AG04450 (cell line): ENCODE measurements at regions of chr3 and their contacts with region 1.

Region 1: GRCh38 chr3:125280668-125281361 is 68.3 kb upstream of the SLC12A8 start:
- DNase-seq: no peak
- H3K4me3 ChIP-seq: no peak overlapping the region
- H3K27ac ChIP-seq: no peak overlapping the region
- H3K27me3 ChIP-seq: no peaks in the 10 kb centered on the region
- CTCF ChIP-seq: no peak

Region 2: DNA sequence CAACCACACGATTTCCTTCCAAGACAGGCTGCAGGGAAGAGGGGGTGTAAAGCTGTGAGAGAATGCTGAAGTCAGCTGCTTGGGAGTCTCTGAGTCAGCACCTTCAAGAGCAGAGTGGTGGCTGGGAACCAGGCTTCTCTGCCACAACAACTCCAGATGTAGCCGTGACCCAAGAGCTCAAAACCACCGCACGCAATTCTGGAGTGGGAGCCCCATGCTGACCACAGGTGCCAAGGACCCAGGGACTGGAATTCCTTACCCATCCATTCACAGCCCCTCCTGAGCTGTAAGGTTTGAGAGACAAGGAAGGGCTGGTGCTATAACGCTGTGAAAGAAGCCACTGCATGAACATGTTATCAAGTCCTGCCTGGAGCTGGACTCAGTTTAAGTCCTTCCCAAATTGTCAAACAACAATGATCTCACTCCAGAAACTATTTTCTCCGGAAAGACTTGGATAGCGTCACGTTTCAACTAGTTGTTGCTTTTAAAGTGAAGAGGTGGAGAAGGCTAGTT is 489.1 kb before region 1 on chr3:
- CTCF ChIA-PET with region 1: no interaction called
- POLR2A ChIA-PET with region 1: interaction called, 11 read pairs
- DNase-seq: peak; percentile 91
- H3K4me3 ChIP-seq: no peak overlapping the region
- H3K27ac ChIP-seq: peak overlapping the region; percentile 87
- H3K27me3 ChIP-seq: no peaks in the 10 kb centered on the region
- CTCF ChIP-seq: no peak

Region 3: GRCh38 chr3:124995460-124995994 is 285.3 kb before region 1 on chr3:
- CTCF ChIA-PET with region 1: no interaction called
- POLR2A ChIA-PET with region 1: no interaction called
- DNase-seq: no peak
- H3K4me3 ChIP-seq: no peak overlapping the region
- H3K27ac ChIP-seq: peak overlapping the region; percentile 21
- H3K27me3 ChIP-seq: no peaks in the 10 kb centered on the region
- CTCF ChIP-seq: peak; percentile 54

Region 4: DNA sequence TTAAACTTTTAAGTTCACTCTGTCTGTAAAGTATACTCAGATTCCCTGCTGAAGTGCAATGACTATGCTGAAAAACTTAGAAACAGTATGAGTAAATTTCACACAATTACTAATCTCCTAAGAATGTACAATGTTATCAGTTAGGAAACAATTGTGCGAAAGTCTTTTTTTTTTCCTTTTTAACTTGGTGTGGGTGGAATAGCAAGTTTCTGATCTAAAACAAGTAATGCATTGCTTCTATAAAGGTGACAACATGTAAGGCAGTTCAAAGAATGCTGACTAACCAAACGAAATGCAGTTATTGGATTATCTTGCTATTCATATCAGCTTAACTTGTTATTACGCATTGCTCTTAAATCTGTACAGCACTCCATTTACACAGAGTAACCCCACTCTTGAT is 48.9 kb before region 1 on chr3:
- CTCF ChIA-PET with region 1: no interaction called
- POLR2A ChIA-PET with region 1: no interaction called
- DNase-seq: peak; percentile 29
- H3K4me3 ChIP-seq: no peak overlapping the region
- H3K27ac ChIP-seq: no peak overlapping the region
- H3K27me3 ChIP-seq: no peaks in the 10 kb centered on the region
- CTCF ChIP-seq: no peak

Region 5: DNA sequence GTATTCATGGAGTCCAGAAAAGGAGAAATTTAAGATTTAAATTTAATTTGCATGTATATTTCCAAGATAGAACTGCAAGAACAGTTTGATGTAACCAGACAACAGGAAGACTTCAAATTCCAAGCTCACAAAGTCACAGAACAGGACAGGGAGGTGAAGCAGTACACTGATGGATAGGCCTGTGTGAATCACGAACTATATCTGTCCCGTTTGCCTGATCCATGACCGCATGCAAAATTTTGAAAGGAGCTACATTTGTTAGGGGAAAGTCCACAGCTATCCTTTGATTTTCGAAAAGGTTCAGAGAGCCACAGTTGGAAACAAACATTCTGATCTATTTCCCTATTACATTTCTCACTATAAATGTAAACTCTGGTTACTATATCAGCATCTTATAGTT is 11.2 kb after region 1 on chr3:
- CTCF ChIA-PET with region 1: no interaction called
- POLR2A ChIA-PET with region 1: no interaction called
- DNase-seq: no peak
- H3K4me3 ChIP-seq: no peak overlapping the region
- H3K27ac ChIP-seq: no peak overlapping the region
- H3K27me3 ChIP-seq: no peaks in the 10 kb centered on the region
- CTCF ChIP-seq: no peak

Region 6: GRCh38 chr3:125357032-125357658 is 76.3 kb after region 1 on chr3:
- CTCF ChIA-PET with region 1: no interaction called
- POLR2A ChIA-PET with region 1: interaction called, 10 read pairs
- DNase-seq: no peak
- H3K4me3 ChIP-seq: peak overlapping the region; percentile 66
- H3K27ac ChIP-seq: no peak overlapping the region
- H3K27me3 ChIP-seq: no peaks in the 10 kb centered on the region
- CTCF ChIP-seq: no peak